K562 (cell line): ENCODE measurements at regions of chr2 and their contacts with region 1.

Region 1: GRCh38 chr2:46062637-46063412 is 234.4 kb upstream of the EPAS1 start:
- DNase-seq: peak; percentile 61 to 77 (median 74)
- ATAC-seq: peak; percentile 86
- H3K4me3 ChIP-seq: no peak overlapping the region
- H3K27ac ChIP-seq: no peak overlapping the region
- H3K4me1 ChIP-seq: no peaks in the 10 kb centered on the region; a peak in 1 of 5 replicates
- H3K27me3 ChIP-seq: peaks cover 13 to 24% of the 10 kb centered on the region in 2 experiments; a peak in 4 of 5 replicates
- CTCF ChIP-seq: peak; percentile 77 to 80 (median 79)
- EP300 ChIP-seq: no peak
- POLR2A ChIP-seq: no peak
- RAD21 ChIP-seq: peak; percentile 74 to 83

Region 2: DNA sequence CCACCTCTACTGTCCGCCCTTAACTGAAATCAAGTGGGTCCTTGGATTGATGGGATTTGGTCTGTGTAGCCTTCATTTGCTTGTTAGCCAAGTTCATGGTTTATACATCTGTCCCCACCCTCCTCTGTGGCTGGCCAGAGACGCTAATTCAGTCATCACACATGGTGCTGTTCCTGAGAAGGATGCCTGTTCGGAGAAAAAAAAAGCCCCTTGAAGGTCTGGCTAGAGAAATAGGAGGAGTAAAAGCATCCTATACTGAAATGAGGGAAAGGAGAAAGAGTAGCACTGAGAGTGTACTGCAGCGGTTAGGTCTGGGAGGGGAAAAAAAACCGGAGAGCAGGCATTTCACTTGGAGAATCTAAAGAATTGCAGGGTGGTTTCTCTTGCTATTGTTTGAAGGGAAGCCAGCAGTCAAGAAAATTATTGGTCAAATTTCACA is 53.7 kb after region 1 on chr2:
- CTCF ChIA-PET with region 1: no interaction called
- POLR2A ChIA-PET with region 1: no interaction called
- in situ Hi-C with region 1: no loop called
- intact Hi-C with region 1: no loop called
- DNase-seq: no peak
- ATAC-seq: no peak
- H3K4me3 ChIP-seq: no peak overlapping the region
- H3K27ac ChIP-seq: no peak overlapping the region
- H3K4me1 ChIP-seq: no peaks in the 10 kb centered on the region
- H3K27me3 ChIP-seq: peaks cover 0 to 18% of the 10 kb centered on the region in 2 experiments; a peak in 4 of 5 replicates
- CTCF ChIP-seq: no peak
- EP300 ChIP-seq: no peak
- POLR2A ChIP-seq: no peak
- RAD21 ChIP-seq: no peak

Region 3: GRCh38 chr2:46461011-46461674 is 398.3 kb after region 1 on chr2:
- CTCF ChIA-PET with region 1: interaction called, 5 read pairs
- POLR2A ChIA-PET with region 1: no interaction called
- in situ Hi-C with region 1: no loop called
- intact Hi-C with region 1: loop called (anchors 1 kb)
- DNase-seq: peak; percentile 76 to 84 (median 82)
- ATAC-seq: peak; percentile 83
- H3K4me3 ChIP-seq: no peak overlapping the region
- H3K27ac ChIP-seq: no peak overlapping the region; the same call in 2 of the 3 replicates
- H3K4me1 ChIP-seq: peaks cover 8 to 10% of the 10 kb centered on the region in 2 experiments; a peak in 4 of 5 replicates
- H3K27me3 ChIP-seq: no peaks in the 10 kb centered on the region
- CTCF ChIP-seq: peak; percentile 94 to 98 (median 97)
- EP300 ChIP-seq: no peak
- POLR2A ChIP-seq: no peak
- RAD21 ChIP-seq: peak; percentile 97 to 98

Region 4: GRCh38 chr2:46601328-46601963 is 538.6 kb after region 1 on chr2:
- CTCF ChIA-PET with region 1: no interaction called
- POLR2A ChIA-PET with region 1: no interaction called
- in situ Hi-C with region 1: no loop called
- intact Hi-C with region 1: no loop called
- DNase-seq: no peak
- ATAC-seq: no peak
- H3K4me3 ChIP-seq: no peak overlapping the region
- H3K27ac ChIP-seq: no peak overlapping the region
- H3K4me1 ChIP-seq: no peaks in the 10 kb centered on the region; a peak in 1 of 5 replicates
- H3K27me3 ChIP-seq: no peaks in the 10 kb centered on the region
- CTCF ChIP-seq: peak in 1 of 3 experiments; percentile 56; a peak in 3 of 6 replicates
- EP300 ChIP-seq: no peak
- POLR2A ChIP-seq: no peak
- RAD21 ChIP-seq: peak; percentile 35 to 52; a peak in 3 of 4 replicates